ENCODE measurements at regions of chr2 and their contacts with region 1.

Region 1: GRCh38 chr2:120228531-120228930 is 5.3 kb upstream of the TMEM185B start:
- DNase-seq: no peak
- H3K4me3 ChIP-seq: no peak overlapping the region
- H3K27ac ChIP-seq: no peak overlapping the region
- H3K4me1 ChIP-seq: no peaks in the 10 kb centered on the region
- H3K27me3 ChIP-seq: no peaks in the 10 kb centered on the region
- CTCF ChIP-seq: no peak
- POLR2A ChIP-seq: no peak

Region 2: GRCh38 chr2:119826370-119826961 is 402.1 kb before region 1 on chr2:
- intact Hi-C with region 1: loop called (anchors 5 kb)
- DNase-seq: no peak
- H3K4me3 ChIP-seq: no peak overlapping the region
- H3K27ac ChIP-seq: no peak overlapping the region
- H3K4me1 ChIP-seq: no peaks in the 10 kb centered on the region
- H3K27me3 ChIP-seq: no peaks in the 10 kb centered on the region
- CTCF ChIP-seq: peak in 1 of 3 donors; percentile 11
- POLR2A ChIP-seq: no peak

Region 3: GRCh38 chr2:120177001-120177621 is 51.4 kb before region 1 on chr2:
- intact Hi-C with region 1: no loop called
- DNase-seq: peak in 1 of 2 donors; percentile 21
- H3K4me3 ChIP-seq: peak overlapping the region; percentile 12 to 32 (median 26)
- H3K27ac ChIP-seq: peak overlapping the region in 1 of 2 donors; percentile 8
- H3K4me1 ChIP-seq: no peaks in the 10 kb centered on the region
- H3K27me3 ChIP-seq: no peaks in the 10 kb centered on the region
- CTCF ChIP-seq: no peak
- POLR2A ChIP-seq: no peak

Region 4: DNA sequence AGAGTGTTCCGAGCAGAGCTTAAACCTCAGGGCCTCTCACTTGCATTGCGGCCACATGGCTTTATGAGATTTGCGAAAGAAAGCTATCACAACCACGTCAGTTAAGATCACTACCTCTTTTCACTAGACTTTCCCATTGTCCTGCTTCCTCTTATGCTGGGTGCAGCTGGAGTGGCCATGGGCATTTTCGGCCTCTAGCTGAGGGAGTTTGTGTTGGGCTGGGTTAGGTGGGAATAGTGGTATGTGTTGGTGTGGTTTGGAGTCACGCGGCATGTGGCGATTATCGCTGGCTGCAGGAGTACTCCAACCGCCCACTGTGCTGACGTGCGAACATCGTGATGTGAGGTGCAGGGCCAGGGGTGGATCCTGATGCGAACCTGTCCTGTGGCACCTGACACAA is 51.2 kb after region 1 on chr2:
- intact Hi-C with region 1: no loop called
- DNase-seq: no peak
- H3K4me3 ChIP-seq: no peak overlapping the region
- H3K27ac ChIP-seq: no peak overlapping the region
- H3K4me1 ChIP-seq: no peaks in the 10 kb centered on the region
- H3K27me3 ChIP-seq: no peaks in the 10 kb centered on the region
- CTCF ChIP-seq: no peak
- POLR2A ChIP-seq: no peak

Measured in breast epithelium (tissue), 4 donors.